Dorsolateral prefrontal cortex (tissue), 120 donors: ENCODE measurements at regions of chr16 and their contacts with region 1.

Region 1: GRCh38 chr16:30698139-30698815 is 694 bp upstream of the SRCAP start:
- DNase-seq: peak; percentile 68 to 98 (median 82)
- H3K4me3 ChIP-seq: peak overlapping the region; percentile 76 to 100 (median 96)
- H3K27ac ChIP-seq: peak overlapping the region; percentile 99 to 100 (median 100)
- H3K27me3 ChIP-seq: no peaks in the 10 kb centered on the region
- CTCF ChIP-seq: peak in 17 of 56 donors; percentile 1 to 52 (median 12)

Region 2: DNA sequence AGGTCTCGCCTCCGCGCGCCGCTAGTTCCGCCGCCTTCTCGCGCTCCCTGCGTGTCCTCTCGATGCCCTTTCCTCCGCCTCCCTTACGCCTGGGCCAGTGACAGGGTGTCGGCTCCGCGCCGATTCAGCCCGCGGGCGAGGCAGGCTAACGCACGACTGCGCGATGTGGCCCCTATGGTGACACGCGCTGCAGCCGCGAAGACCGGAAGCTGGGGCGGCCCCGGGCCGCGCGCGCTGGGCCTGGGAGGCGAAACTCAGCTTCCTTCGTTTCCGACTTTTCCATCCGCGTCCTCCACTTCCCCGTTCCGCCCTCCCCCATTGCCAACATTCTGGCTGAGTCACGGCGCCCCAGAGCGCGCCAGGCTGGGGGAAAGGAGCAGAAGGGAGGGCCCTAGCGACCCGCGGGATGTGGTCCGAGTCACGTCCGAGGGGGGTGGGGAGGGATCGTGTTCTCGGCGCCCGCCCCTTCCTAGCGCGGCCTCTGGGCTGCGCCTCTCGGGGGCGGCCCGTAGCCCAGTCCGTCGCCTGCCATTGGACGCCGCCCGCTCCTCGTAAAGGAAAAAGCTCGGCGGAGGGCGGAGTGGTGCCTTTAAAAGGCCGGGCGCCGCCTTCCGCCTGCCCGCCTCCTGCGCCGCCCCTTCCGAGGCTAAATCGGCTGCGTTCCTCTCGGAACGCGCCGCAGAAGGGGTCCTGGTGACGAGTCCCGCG is 633.0 kb before region 1 on chr16 and contains the start of gene ALDOA:
- intact Hi-C with region 1: loop called in 1 of 2 experiments (anchors 2 kb)
- DNase-seq: peak; percentile 94 to 99 (median 98)
- H3K4me3 ChIP-seq: peak within 1 kb of the TSS; percentile 67 to 100 (median 96)
- H3K27ac ChIP-seq: peak within 1 kb of the TSS; percentile 91 to 100 (median 100)
- H3K27me3 ChIP-seq: no peaks in the 10 kb centered on the region
- CTCF ChIP-seq: peak in 42 of 56 donors; percentile 5 to 56 (median 32)
- total RNA-seq, gene ALDOA: 996 to 2,428 (median 1,936) TPM

Region 3: DNA sequence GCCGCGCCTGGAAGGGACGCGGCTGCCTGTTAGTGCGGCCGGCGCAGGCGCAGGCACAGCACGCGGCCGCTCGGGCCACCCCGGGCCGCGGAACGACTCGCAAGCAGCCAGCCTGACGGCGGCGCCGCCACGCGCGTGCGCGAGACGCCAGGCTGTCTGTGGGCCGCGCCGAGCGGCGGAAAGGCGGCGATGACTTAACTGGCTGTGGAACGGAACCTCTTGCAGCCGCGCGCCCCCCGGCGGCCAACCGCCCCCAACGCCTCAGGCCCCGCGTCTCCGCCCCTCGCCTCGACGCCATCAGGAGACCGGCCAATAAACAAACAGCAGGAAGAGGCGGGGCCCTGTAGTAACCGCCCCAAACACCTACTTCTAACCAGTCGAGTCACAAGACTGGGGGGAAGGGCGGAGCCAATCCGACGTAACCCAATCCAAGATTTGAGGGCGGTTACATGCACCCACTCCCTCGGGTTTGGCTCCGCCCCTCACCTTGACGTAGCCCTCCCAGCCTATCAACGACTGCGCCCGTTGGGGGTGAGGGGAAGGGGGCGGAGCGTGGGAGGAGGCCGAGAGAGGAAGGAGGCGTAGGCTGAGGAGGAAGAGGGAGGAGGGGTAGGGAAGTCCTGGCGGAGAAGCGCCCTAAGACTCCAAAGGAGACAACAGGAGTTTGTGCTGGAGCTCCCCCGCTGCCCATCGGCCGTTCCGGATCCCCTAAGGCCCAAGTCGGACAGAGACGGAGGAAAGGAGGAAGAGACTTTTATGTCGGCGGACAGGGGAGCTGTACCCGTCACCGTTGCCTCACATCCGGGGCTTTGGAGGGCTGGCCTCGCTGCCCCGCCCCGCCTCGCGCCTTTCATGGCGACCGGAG is 40.2 kb before region 1 on chr16 and contains the start of gene FBRS:
- intact Hi-C with region 1: loop called (anchors 1 kb)
- DNase-seq: peak; percentile 99 to 100 (median 100)
- H3K4me3 ChIP-seq: peak within 1 kb of the TSS; percentile 63 to 97 (median 88)
- H3K27ac ChIP-seq: peak within 1 kb of the TSS; percentile 93 to 100 (median 100)
- H3K27me3 ChIP-seq: no peaks in the 10 kb centered on the region
- CTCF ChIP-seq: peak; percentile 57 to 96 (median 88)
- total RNA-seq, gene FBRS: 39.8 to 86.3 (median 56.3) TPM

Region 4: GRCh38 chr16:30747799-30748634 is 49.7 kb after region 1 on chr16 and contains the start of gene PHKG2:
- intact Hi-C with region 1: loop called in 1 of 2 experiments (anchors 2 kb)
- DNase-seq: peak; percentile 98 to 100 (median 99)
- H3K4me3 ChIP-seq: peak within 1 kb of the TSS; percentile 58 to 97 (median 80)
- H3K27ac ChIP-seq: peak within 1 kb of the TSS in 55 of 59 donors; percentile 3 to 88 (median 75)
- H3K27me3 ChIP-seq: no peaks in the 10 kb centered on the region
- CTCF ChIP-seq: peak in 33 of 56 donors; percentile 7 to 61 (median 34)
- total RNA-seq, gene PHKG2: 25.1 to 55.2 (median 38.8) TPM

Region 5: GRCh38 chr16:30761928-30762810 is 63.9 kb after region 1 on chr16 and contains the starts of genes CFAP119 and RNF40:
- intact Hi-C with region 1: loop called (anchors 1 to 5 kb)
- DNase-seq: peak; percentile 92 to 98 (median 97)
- H3K4me3 ChIP-seq: peak within 1 kb of the TSS; percentile 66 to 99 (median 90)
- H3K27ac ChIP-seq: peak within 1 kb of the TSS in 58 of 59 donors; percentile 36 to 96 (median 86)
- H3K27me3 ChIP-seq: no peaks in the 10 kb centered on the region
- CTCF ChIP-seq: peak in 33 of 56 donors; percentile 4 to 48 (median 22)
- total RNA-seq, gene CFAP119: 3.6 to 27.3 (median 12.7) TPM
- total RNA-seq, gene RNF40: 72.0 to 128 (median 95.4) TPM

Region 6: GRCh38 chr16:30775392-30776188 is 77.3 kb after region 1 on chr16:
- intact Hi-C with region 1: loop called in 1 of 2 experiments (anchors 5 kb)
- DNase-seq: peak; percentile 71 to 91 (median 88)
- H3K4me3 ChIP-seq: peak overlapping the region; percentile 55 to 100 (median 78)
- H3K27ac ChIP-seq: peak overlapping the region; percentile 26 to 96 (median 82)
- H3K27me3 ChIP-seq: no peaks in the 10 kb centered on the region
- CTCF ChIP-seq: peak in 7 of 56 donors; percentile 0 to 19 (median 14)

Region 7: GRCh38 chr16:30893744-30894539 is 195.7 kb after region 1 on chr16 and contains the start of gene BCL7C:
- intact Hi-C with region 1: loop called in 1 of 2 experiments (anchors 10 kb)
- DNase-seq: peak; percentile 60 to 89 (median 77)
- H3K4me3 ChIP-seq: peak within 1 kb of the TSS; percentile 55 to 93 (median 80)
- H3K27ac ChIP-seq: peak within 1 kb of the TSS; percentile 66 to 97 (median 91)
- H3K27me3 ChIP-seq: no peaks in the 10 kb centered on the region
- CTCF ChIP-seq: peak in 51 of 56 donors; percentile 18 to 79 (median 55)
- total RNA-seq, gene BCL7C: 8.8 to 28.1 (median 15.6) TPM